ENCODE measurements at regions of chr11 and their contacts with region 1.

Region 1: GRCh38 chr11:57800444-57801182 is 39.0 kb downstream of the CTNND1 start:
- DNase-seq: peak; percentile 85
- H3K4me3 ChIP-seq: peak overlapping the region in 1 of 3 experiments; percentile 44
- H3K27ac ChIP-seq: peak overlapping the region; percentile 85
- H3K4me1 ChIP-seq: peaks cover 37% of the 10 kb centered on the region
- H3K27me3 ChIP-seq: no peaks in the 10 kb centered on the region
- CTCF ChIP-seq: peak; percentile 55 to 72
- POLR2A ChIP-seq: no peak

Region 2: GRCh38 chr11:57680552-57680874 is 120.1 kb before region 1 on chr11:
- CTCF ChIA-PET with region 1: no interaction called
- POLR2A ChIA-PET with region 1: no interaction called
- dilution Hi-C with region 1: loop called (anchors 10 kb)
- intact Hi-C with region 1: no loop called
- DNase-seq: peak; percentile 16
- H3K4me3 ChIP-seq: no peak overlapping the region
- H3K27ac ChIP-seq: no peak overlapping the region
- H3K4me1 ChIP-seq: peaks cover 11% of the 10 kb centered on the region
- H3K27me3 ChIP-seq: no peaks in the 10 kb centered on the region
- CTCF ChIP-seq: no peak
- POLR2A ChIP-seq: no peak

Region 3: DNA sequence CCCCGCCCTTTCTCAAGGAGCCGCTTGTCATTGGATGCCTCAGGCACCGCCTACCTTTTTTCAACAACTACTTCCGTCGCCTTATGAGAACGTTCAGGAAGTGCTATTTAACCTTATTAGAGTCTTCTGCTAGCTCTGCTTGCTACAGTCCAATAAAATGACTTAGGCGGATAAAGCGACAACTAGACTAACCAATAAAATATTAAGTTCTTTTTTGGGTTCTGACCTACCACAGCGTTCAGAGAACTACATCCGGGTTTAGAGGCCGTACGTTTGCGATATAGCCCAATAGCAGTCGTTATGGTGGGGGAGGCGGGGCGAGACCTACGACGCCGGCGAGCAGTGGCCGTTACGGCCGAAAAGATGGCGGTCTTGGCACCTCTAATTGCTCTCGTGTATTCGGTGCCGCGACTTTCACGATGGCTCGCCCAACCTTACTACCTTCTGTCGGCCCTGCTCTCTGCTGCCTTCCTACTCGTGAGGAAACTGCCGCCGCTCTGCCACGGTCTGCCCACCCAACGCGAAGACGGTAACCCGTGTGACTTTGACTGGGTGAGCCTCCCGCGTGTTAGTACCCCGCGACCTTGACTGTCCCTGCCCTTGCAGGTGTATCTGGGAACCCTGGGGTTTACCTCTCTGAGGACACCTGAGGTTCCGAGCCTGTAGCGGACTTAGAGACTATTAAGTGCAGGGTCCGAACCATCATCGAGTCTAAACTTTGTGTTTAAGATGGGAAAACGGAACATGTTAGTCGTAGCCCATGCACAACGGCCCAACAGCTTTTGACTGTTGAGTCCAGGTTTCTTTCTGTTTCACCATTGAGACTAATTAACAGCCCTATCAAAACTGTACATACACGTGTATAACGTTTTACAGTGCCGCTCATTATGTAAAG is 88.1 kb before region 1 on chr11 and contains the start of gene TMX2:
- CTCF ChIA-PET with region 1: interaction called, 21 read pairs
- POLR2A ChIA-PET with region 1: no interaction called
- dilution Hi-C with region 1: no loop called
- intact Hi-C with region 1: loop called (anchors 1 kb)
- DNase-seq: peak; percentile 99
- H3K4me3 ChIP-seq: peak within 1 kb of the TSS; percentile 64 to 100 (median 78)
- H3K27ac ChIP-seq: peak within 1 kb of the TSS; percentile 67
- H3K4me1 ChIP-seq: peaks cover 18% of the 10 kb centered on the region
- H3K27me3 ChIP-seq: no peaks in the 10 kb centered on the region
- CTCF ChIP-seq: no peak
- POLR2A ChIP-seq: no peak
- total RNA-seq, gene TMX2: 66.3 and 67.7 TPM in 2 replicates

Region 4: GRCh38 chr11:57751676-57752253 is 48.8 kb before region 1 on chr11 and contains the start of gene BTBD18:
- CTCF ChIA-PET with region 1: interaction called, 375 read pairs
- POLR2A ChIA-PET with region 1: interaction called, 11 read pairs
- dilution Hi-C with region 1: no loop called
- intact Hi-C with region 1: loop called (anchors 1 kb)
- DNase-seq: peak; percentile 60
- H3K4me3 ChIP-seq: no peak within 1 kb of the TSS
- H3K27ac ChIP-seq: no peak within 1 kb of the TSS
- H3K4me1 ChIP-seq: no peaks in the 10 kb centered on the region
- H3K27me3 ChIP-seq: no peaks in the 10 kb centered on the region
- CTCF ChIP-seq: peak; percentile 46 to 49
- POLR2A ChIP-seq: no peak
- total RNA-seq, gene BTBD18: not detected in 2 replicates

Region 5: GRCh38 chr11:57772562-57772961 is 28.1 kb before region 1 on chr11:
- CTCF ChIA-PET with region 1: interaction called, 123 read pairs
- POLR2A ChIA-PET with region 1: interaction called, 3 read pairs
- dilution Hi-C with region 1: no loop called
- intact Hi-C with region 1: no loop called
- DNase-seq: no peak
- H3K4me3 ChIP-seq: no peak overlapping the region
- H3K27ac ChIP-seq: peak overlapping the region; percentile 18
- H3K4me1 ChIP-seq: peaks cover 62% of the 10 kb centered on the region
- H3K27me3 ChIP-seq: no peaks in the 10 kb centered on the region
- CTCF ChIP-seq: no peak
- POLR2A ChIP-seq: no peak

Region 6: DNA sequence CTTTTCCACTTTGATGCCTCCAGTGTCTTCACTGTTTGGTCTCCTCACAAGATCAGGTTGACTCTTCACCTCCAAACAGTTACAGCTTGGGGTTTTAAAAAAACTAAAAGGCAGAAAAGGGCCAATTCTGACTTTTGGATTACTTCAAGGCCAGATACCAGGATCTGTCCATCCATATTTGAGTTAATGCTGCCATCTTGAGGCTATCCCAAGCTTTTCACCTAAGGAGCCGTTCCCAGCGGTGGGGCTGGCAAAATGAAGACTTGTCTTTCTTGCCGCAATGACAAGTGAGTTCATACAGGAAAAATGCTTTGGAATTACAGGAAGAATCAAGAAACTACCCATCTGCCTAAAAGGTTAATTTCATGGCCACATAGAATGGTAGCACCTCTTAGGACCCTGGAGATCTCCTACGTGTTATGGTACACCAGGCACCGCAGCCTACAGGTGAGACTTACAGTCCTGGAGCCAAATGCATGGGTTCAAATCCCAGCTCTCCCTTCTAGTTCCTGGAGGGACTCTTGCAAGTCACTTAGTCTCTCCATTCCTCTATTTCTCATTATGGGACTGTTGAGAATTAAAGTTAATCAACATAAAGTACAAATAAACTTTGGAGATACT is 713.2 kb after region 1 on chr11:
- CTCF ChIA-PET with region 1: interaction called, 3 read pairs
- POLR2A ChIA-PET with region 1: no interaction called
- dilution Hi-C with region 1: no loop called
- intact Hi-C with region 1: loop called (anchors 1 kb)
- DNase-seq: peak; percentile 73
- H3K4me3 ChIP-seq: no peak overlapping the region
- H3K27ac ChIP-seq: no peak overlapping the region
- H3K4me1 ChIP-seq: no peaks in the 10 kb centered on the region
- H3K27me3 ChIP-seq: peaks cover 18 to 32% of the 10 kb centered on the region in 2 experiments
- CTCF ChIP-seq: peak; percentile 57 to 68
- POLR2A ChIP-seq: no peak

Measured in endothelial cell of umbilical vein (primary cell).